Right ventricle myocardium inferior (tissue), 1 donor: ENCODE measurements at regions of chr4 and their contacts with region 1.

Region 1: DNA sequence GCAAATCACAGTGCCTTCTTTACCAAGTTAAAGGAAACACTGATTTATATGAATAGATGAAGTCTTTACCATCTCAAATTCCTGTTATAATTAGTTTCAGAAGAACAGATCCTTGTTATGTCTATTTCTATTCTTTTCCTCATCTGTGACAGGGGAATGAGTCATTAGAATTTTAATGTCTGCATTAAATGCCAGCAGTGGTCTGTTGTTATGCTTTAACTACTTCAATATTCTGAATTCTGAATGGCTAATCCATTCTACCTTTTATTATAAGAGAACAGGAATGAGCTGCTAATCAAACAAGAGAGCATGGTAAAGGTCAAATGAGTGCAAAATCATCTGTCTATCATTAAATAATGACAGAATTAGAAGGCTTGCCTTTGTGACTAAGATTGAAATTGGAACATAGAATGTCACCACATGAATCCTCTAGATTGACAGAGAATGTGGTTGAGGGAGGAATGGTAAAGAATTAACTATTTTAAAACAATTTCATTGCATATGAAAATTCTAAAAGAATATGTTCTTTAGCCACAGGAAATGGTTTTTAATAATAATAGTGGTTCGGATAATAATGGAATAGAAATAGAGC is 935.5 kb downstream of the ADGRL3 start:
- DNase-seq: no peak
- ATAC-seq: no peak

Region 2: DNA sequence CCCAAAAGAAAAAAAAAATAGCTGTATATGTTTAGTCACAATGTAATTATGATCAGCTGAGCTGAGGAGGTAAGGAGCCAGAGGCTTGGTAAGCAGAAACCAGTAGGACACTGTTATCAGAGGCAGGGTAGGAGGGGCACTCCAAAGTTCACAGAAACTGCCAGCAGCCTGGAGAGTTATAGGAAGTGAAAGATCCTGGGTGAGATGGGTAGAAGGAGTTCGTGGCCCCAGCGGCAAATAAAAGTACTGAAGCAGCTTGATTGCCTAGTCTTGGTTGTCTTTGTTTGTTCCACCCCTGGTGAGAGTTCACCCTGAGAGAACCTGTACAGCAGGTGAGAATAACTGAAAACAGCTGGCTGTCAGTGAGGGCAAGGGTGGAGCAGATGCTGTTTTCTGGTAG is 594.7 kb before region 1 on chr4:
- intact Hi-C with region 1: loop called (anchors 10 kb)
- DNase-seq: no peak
- ATAC-seq: no peak

Region 3: GRCh38 chr4:61750810-61751209 is 384.9 kb before region 1 on chr4:
- intact Hi-C with region 1: no loop called
- DNase-seq: no peak
- ATAC-seq: no peak

Region 4: DNA sequence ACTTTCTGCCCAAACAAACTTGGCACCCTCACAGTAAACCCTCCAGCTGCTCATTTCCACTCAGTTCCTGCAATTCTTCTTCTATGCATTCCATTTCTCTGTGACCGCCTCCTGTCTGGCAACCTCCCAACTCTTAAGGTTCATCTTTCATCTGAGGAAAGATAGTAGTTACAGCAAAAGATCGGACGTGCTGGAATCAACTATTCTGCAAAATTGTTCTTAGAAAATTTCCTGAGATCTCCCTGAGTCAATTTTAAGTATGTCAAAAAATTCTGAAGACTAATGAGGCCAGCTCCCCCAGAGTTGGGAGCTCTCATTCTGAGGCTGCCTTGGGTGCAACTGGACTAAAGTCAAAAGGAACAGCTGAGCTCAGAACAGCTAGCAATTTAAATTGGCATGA is 90.4 kb after region 1 on chr4:
- intact Hi-C with region 1: loop called (anchors 10 kb)
- DNase-seq: no peak
- ATAC-seq: no peak

Region 5: GRCh38 chr4:62410371-62411003 is 274.8 kb after region 1 on chr4:
- intact Hi-C with region 1: loop called (anchors 5 kb)
- DNase-seq: no peak
- ATAC-seq: peak; percentile 96